IMR-90 (cell line): ENCODE measurements at regions of chr3 and their contacts with region 1.

Region 1: GRCh38 chr3:154971771-154972326 is 108.3 kb upstream of the MME start:
- DNase-seq: peak; percentile 42
- ATAC-seq: no peak
- H3K4me3 ChIP-seq: no peak overlapping the region
- H3K27ac ChIP-seq: no peak overlapping the region
- H3K4me1 ChIP-seq: peaks cover 6% of the 10 kb centered on the region; the same call in 1 of the 2 replicates
- H3K27me3 ChIP-seq: no peaks in the 10 kb centered on the region
- CTCF ChIP-seq: no peak
- POLR2A ChIP-seq: no peak
- RAD21 ChIP-seq: no peak

Region 2: GRCh38 chr3:155070932-155071387 is 99.1 kb after region 1 on chr3:
- CTCF ChIA-PET with region 1: no interaction called
- POLR2A ChIA-PET with region 1: no interaction called
- dilution Hi-C with region 1: no loop called
- in situ Hi-C with region 1: no loop called
- intact Hi-C with region 1: loop called (anchors 5 kb)
- DNase-seq: peak; percentile 99
- ATAC-seq: peak; percentile 93
- H3K4me3 ChIP-seq: no peak overlapping the region
- H3K27ac ChIP-seq: peak overlapping the region; percentile 58
- H3K4me1 ChIP-seq: peaks cover 7% of the 10 kb centered on the region
- H3K27me3 ChIP-seq: no peaks in the 10 kb centered on the region
- CTCF ChIP-seq: no peak
- POLR2A ChIP-seq: 0 out of 2 replicates have a peak, but pooled peaks have one; percentile 18
- RAD21 ChIP-seq: no peak; the same call in 1 of the 2 replicates